Activated CD8-positive, alpha-beta T cell treated with anti-CD3 and anti-CD28 coated beads, Interleukin-2, amount 10 ng/mL, durations not matched to agents 7 days and 5 days (primary cell): ENCODE measurements at regions of chrX and their contacts with region 1.

Region 1: DNA sequence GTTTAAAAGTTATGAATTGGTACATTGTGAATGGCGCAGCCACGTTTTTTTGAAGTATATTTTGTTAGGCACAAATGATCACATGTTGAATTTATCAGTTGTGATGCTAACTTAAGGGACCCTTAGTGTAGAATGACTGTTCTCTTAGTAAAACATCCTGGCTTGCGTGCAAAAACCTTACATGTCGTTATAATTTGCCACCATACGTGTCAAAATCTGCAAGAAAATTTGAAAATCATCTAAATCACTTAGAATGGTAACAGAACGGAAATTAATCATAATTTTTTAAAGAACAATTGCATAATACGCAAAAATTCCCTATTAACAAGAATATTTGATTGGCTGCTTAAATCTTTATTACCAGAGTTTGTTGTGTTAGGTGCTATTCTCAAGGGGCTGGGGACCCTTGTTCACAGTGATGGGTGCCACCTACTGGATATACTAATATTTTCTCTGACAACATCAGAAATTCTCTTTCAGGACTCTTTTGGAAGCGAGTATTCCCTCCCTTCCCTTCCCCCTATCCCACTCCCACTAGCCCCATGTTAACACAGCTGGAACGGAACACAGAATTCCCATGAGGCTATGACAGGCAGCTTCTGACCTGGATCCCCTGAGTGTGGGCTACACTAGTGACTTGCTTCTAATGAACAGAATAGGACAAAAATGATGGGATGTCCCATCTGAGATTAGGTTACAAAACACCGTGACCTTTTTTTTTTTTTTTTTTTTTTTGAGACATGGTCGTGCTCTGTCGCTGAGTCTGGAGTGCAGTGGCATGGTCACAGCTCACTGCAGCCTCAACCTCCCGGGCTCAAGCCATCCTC is 71.8 kb downstream of the SUPT20HL2 start:
- DNase-seq: no peak
- ATAC-seq: no peak
- H3K4me3 Mint-ChIP-seq: no peak overlapping the region
- H3K27ac Mint-ChIP-seq: no peak overlapping the region
- H3K4me1 Mint-ChIP-seq: no peaks in the 10 kb centered on the region
- H3K27me3 Mint-ChIP-seq: peaks cover 10% of the 10 kb centered on the region

Region 2: GRCh38 chrX:24081661-24082264 is 160.3 kb before region 1 on chrX:
- CTCF ChIA-PET with region 1: interaction called, 12 read pairs
- POLR2A ChIA-PET with region 1: no interaction called
- DNase-seq: peak; percentile 65
- ATAC-seq: peak; percentile 88
- H3K4me3 Mint-ChIP-seq: peak overlapping the region; percentile 34
- H3K27ac Mint-ChIP-seq: no peak overlapping the region
- H3K4me1 Mint-ChIP-seq: peaks cover 10% of the 10 kb centered on the region
- H3K27me3 Mint-ChIP-seq: no peaks in the 10 kb centered on the region

Region 3: GRCh38 chrX:24253469-24253868 is 11.4 kb after region 1 on chrX:
- CTCF ChIA-PET with region 1: no interaction called
- POLR2A ChIA-PET with region 1: no interaction called
- DNase-seq: no peak
- ATAC-seq: no peak
- H3K4me3 Mint-ChIP-seq: no peak overlapping the region
- H3K27ac Mint-ChIP-seq: no peak overlapping the region
- H3K4me1 Mint-ChIP-seq: no peaks in the 10 kb centered on the region
- H3K27me3 Mint-ChIP-seq: peaks cover 3% of the 10 kb centered on the region

Region 4: DNA sequence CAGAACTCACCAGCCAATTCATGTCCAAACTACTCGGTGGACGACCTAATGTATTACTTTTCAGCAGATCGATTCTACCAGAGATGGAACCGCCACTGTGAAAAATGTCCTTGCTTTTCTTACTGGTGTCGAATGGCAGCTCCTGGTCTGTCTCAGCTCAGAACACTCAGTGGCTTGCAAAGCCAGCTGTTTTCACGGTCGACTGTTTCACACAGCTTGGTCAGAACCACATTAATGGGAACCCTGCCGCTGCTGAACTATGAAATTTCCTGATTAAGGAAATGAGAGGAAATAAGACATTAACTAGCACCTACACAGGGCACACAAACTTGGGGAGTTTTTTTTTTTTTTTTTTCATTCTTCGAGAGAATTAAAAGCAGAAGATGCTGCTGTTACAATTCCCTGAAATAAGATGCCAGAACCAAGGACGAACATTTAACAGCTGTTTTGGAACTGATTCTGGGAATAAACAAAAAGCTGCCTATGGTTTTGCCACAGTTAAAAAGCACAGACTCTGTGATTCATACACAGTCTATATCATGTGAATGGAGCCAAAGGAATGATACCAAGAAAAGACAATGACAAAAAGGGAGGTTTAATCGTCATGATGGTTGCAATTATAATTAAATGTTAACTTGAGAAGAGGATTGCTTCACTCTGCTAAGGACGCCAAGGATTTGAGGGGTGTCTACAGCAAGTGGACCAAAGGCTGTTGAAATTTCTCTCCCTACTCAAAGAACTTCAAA is 40.5 kb after region 1 on chrX:
- CTCF ChIA-PET with region 1: no interaction called
- POLR2A ChIA-PET with region 1: no interaction called
- DNase-seq: no peak
- ATAC-seq: no peak
- H3K4me3 Mint-ChIP-seq: no peak overlapping the region
- H3K27ac Mint-ChIP-seq: no peak overlapping the region
- H3K4me1 Mint-ChIP-seq: peaks cover 4% of the 10 kb centered on the region
- H3K27me3 Mint-ChIP-seq: peaks cover 24% of the 10 kb centered on the region